T-cell (primary cell): ENCODE measurements at regions of chr19 and their contacts with region 1.

Region 1: GRCh38 chr19:57746580-57747471 is at the start of gene ZNF776:
- DNase-seq: peak; percentile 60 to 92 (median 81)
- ATAC-seq: peak; percentile 98 to 99 (median 99)
- H3K4me3 ChIP-seq: peak within 1 kb of the TSS; percentile 86 to 90
- H3K4me3 Mint-ChIP-seq: peak within 1 kb of the TSS; percentile 89 to 100 (median 91)
- H3K27ac ChIP-seq: peak within 1 kb of the TSS; percentile 80
- H3K27ac Mint-ChIP-seq: peak within 1 kb of the TSS; percentile 85 to 92
- H3K4me1 ChIP-seq: peaks cover 9 to 15% of the 10 kb centered on the region in 2 experiments
- H3K4me1 Mint-ChIP-seq: peaks cover 28 to 42% (median 29%) of the 10 kb centered on the region in 3 donors
- H3K27me3 ChIP-seq: no peaks in the 10 kb centered on the region
- H3K27me3 Mint-ChIP-seq: no peaks in the 10 kb centered on the region
- total RNA-seq, gene ZNF776: 14.3 to 36.5 (median 26.9) TPM

Region 2: DNA sequence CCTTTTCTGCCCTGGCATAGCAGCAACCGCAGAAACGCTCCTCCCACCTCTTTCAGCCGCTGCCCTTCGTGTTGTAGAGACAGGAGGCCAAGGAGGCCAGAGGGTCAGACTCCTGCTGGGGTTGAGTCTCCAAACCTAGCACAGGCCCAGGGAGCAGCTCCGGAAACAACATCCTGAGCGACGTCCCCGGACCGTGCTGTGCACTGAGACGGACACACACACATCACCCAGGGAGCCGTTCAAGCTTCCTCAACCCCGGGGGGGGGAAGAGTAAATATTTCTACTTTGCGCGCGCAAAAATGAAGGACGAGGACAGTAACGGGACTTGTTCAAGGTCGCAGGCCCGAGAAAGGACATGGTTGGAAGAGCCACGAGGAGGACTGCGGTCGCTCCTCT is 187.8 kb before region 1 on chr19:
- CTCF ChIA-PET with region 1: no interaction called
- POLR2A ChIA-PET with region 1: no interaction called
- DNase-seq: peak in 5 of 35 experiments; percentile 2 to 19 (median 7)
- ATAC-seq: peak; percentile 27 to 37 (median 32)
- H3K4me3 ChIP-seq: peak overlapping the region; percentile 83 to 88
- H3K4me3 Mint-ChIP-seq: peak overlapping the region; percentile 92 to 97 (median 94)
- H3K27ac ChIP-seq: peak overlapping the region; percentile 68
- H3K27ac Mint-ChIP-seq: peak overlapping the region; percentile 83 to 86
- H3K4me1 ChIP-seq: peaks cover 10 to 25% of the 10 kb centered on the region in 2 experiments
- H3K4me1 Mint-ChIP-seq: peaks cover 33 to 39% (median 37%) of the 10 kb centered on the region in 3 donors
- H3K27me3 ChIP-seq: no peaks in the 10 kb centered on the region
- H3K27me3 Mint-ChIP-seq: peaks cover 4 to 8% of the 10 kb centered on the region in 2 donors

Region 3: GRCh38 chr19:57708641-57709361 is 38.0 kb before region 1 on chr19 and contains the start of gene ZNF154:
- CTCF ChIA-PET with region 1: interaction called in 1 of 2 experiments, 11 read pairs
- POLR2A ChIA-PET with region 1: no interaction called
- DNase-seq: peak in 34 of 35 experiments; percentile 11 to 78 (median 48)
- ATAC-seq: peak; percentile 86 to 95 (median 88)
- H3K4me3 ChIP-seq: peak within 1 kb of the TSS; percentile 55 to 71
- H3K4me3 Mint-ChIP-seq: peak within 1 kb of the TSS; percentile 76 to 94 (median 88)
- H3K27ac ChIP-seq: peak within 1 kb of the TSS; percentile 80
- H3K27ac Mint-ChIP-seq: peak within 1 kb of the TSS; percentile 42 to 82
- H3K4me1 ChIP-seq: peaks cover 11 to 12% of the 10 kb centered on the region in 2 experiments
- H3K4me1 Mint-ChIP-seq: peaks cover 12 to 33% (median 31%) of the 10 kb centered on the region in 3 donors
- H3K27me3 ChIP-seq: peaks cover 0 to 13% of the 10 kb centered on the region in 2 experiments
- H3K27me3 Mint-ChIP-seq: peaks cover 0 to 11% of the 10 kb centered on the region in 2 donors
- total RNA-seq, gene ZNF154: 6.3 to 16.2 (median 7.7) TPM

Region 4: GRCh38 chr19:57781815-57782214 is 35.0 kb after region 1 on chr19:
- CTCF ChIA-PET with region 1: no interaction called
- POLR2A ChIA-PET with region 1: no interaction called
- DNase-seq: no peak
- ATAC-seq: no peak
- H3K4me3 ChIP-seq: no peak overlapping the region
- H3K4me3 Mint-ChIP-seq: no peak overlapping the region
- H3K27ac ChIP-seq: no peak overlapping the region
- H3K27ac Mint-ChIP-seq: no peak overlapping the region
- H3K4me1 ChIP-seq: no peaks in the 10 kb centered on the region
- H3K4me1 Mint-ChIP-seq: peaks cover 0 to 1% (median 0%) of the 10 kb centered on the region in 3 donors
- H3K27me3 ChIP-seq: no peaks in the 10 kb centered on the region
- H3K27me3 Mint-ChIP-seq: no peaks in the 10 kb centered on the region

Region 5: GRCh38 chr19:57825511-57825910 is 78.7 kb after region 1 on chr19:
- CTCF ChIA-PET with region 1: no interaction called
- POLR2A ChIA-PET with region 1: interaction called in 1 of 2 experiments, 12 read pairs
- DNase-seq: no peak
- ATAC-seq: no peak
- H3K4me3 ChIP-seq: no peak overlapping the region
- H3K4me3 Mint-ChIP-seq: no peak overlapping the region
- H3K27ac ChIP-seq: no peak overlapping the region
- H3K27ac Mint-ChIP-seq: no peak overlapping the region
- H3K4me1 ChIP-seq: peaks cover 3 to 12% of the 10 kb centered on the region in 2 experiments
- H3K4me1 Mint-ChIP-seq: peaks cover 61 to 65% (median 63%) of the 10 kb centered on the region in 3 donors
- H3K27me3 ChIP-seq: no peaks in the 10 kb centered on the region
- H3K27me3 Mint-ChIP-seq: no peaks in the 10 kb centered on the region